CD8-positive, alpha-beta T cell (primary cell): ENCODE measurements at regions of chr18 and their contacts with region 1.

Region 1: GRCh38 chr18:77984178-77984577 is 734.5 kb downstream of the GALR1 start:
- DNase-seq: no peak
- ATAC-seq: no peak
- H3K4me3 ChIP-seq: no peak overlapping the region
- H3K4me3 Mint-ChIP-seq: no peak overlapping the region
- H3K27ac ChIP-seq: no peak overlapping the region
- H3K27ac Mint-ChIP-seq: no peak overlapping the region
- H3K4me1 ChIP-seq: no peaks in the 10 kb centered on the region
- H3K4me1 Mint-ChIP-seq: no peaks in the 10 kb centered on the region
- H3K27me3 ChIP-seq: no peaks in the 10 kb centered on the region
- H3K27me3 Mint-ChIP-seq: no peaks in the 10 kb centered on the region
- CTCF ChIP-seq: no peak

Region 2: GRCh38 chr18:77959248-77959647 is 24.9 kb before region 1 on chr18:
- CTCF ChIA-PET with region 1: no interaction called
- POLR2A ChIA-PET with region 1: no interaction called
- intact Hi-C with region 1: loop called in 1 of 2 experiments (anchors 1 kb)
- DNase-seq: no peak
- ATAC-seq: no peak
- H3K4me3 ChIP-seq: no peak overlapping the region
- H3K4me3 Mint-ChIP-seq: no peak overlapping the region
- H3K27ac ChIP-seq: no peak overlapping the region
- H3K27ac Mint-ChIP-seq: no peak overlapping the region
- H3K4me1 ChIP-seq: no peaks in the 10 kb centered on the region
- H3K4me1 Mint-ChIP-seq: no peaks in the 10 kb centered on the region
- H3K27me3 ChIP-seq: no peaks in the 10 kb centered on the region
- H3K27me3 Mint-ChIP-seq: peaks cover 4% of the 10 kb centered on the region
- CTCF ChIP-seq: no peak